ENCODE measurements at regions of chr7 and their contacts with region 1.

Region 1: GRCh38 chr7:3805151-3805550 is 504.1 kb downstream of the SDK1 start:
- DNase-seq: no peak
- ATAC-seq: no peak
- H3K4me3 Mint-ChIP-seq: no peak overlapping the region
- H3K27ac Mint-ChIP-seq: no peak overlapping the region
- H3K4me1 Mint-ChIP-seq: peaks cover 32% of the 10 kb centered on the region
- H3K27me3 Mint-ChIP-seq: no peaks in the 10 kb centered on the region
- CTCF ChIP-seq: no peak

Region 2: DNA sequence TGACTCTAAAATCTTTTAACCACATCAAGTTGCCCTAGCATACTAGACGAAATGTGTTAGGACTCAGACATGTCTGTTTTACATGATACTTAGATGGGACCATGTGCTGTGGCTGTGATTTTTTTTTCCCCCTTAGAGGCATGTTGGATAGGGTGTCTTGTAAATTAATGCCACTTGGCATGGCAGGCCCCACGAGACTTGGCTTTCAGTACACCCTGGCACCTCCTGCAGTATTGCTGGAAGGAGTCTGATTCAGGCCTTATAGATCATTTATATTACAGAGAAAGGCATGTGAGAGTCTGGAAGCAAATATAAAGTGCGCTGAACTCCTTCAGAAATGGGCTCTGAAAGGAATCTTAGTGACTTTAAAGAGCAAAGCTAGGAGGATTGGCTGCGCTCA is 10.0 kb before region 1 on chr7:
- CTCF ChIA-PET with region 1: no interaction called
- POLR2A ChIA-PET with region 1: interaction called, 11 read pairs
- DNase-seq: no peak
- ATAC-seq: no peak
- H3K4me3 Mint-ChIP-seq: no peak overlapping the region
- H3K27ac Mint-ChIP-seq: no peak overlapping the region
- H3K4me1 Mint-ChIP-seq: peaks cover 9% of the 10 kb centered on the region
- H3K27me3 Mint-ChIP-seq: no peaks in the 10 kb centered on the region
- CTCF ChIP-seq: no peak

Region 3: GRCh38 chr7:3980300-3980643 is 175.1 kb after region 1 on chr7:
- CTCF ChIA-PET with region 1: no interaction called
- POLR2A ChIA-PET with region 1: no interaction called
- DNase-seq: no peak
- ATAC-seq: peak; percentile 58; the same call in 1 of the 2 replicates
- H3K4me3 Mint-ChIP-seq: no peak overlapping the region
- H3K27ac Mint-ChIP-seq: peak overlapping the region; percentile 46
- H3K4me1 Mint-ChIP-seq: peaks cover 14% of the 10 kb centered on the region
- H3K27me3 Mint-ChIP-seq: no peaks in the 10 kb centered on the region
- CTCF ChIP-seq: no peak